ENCODE measurements at regions of chr10 and their contacts with region 1.

Region 1: DNA sequence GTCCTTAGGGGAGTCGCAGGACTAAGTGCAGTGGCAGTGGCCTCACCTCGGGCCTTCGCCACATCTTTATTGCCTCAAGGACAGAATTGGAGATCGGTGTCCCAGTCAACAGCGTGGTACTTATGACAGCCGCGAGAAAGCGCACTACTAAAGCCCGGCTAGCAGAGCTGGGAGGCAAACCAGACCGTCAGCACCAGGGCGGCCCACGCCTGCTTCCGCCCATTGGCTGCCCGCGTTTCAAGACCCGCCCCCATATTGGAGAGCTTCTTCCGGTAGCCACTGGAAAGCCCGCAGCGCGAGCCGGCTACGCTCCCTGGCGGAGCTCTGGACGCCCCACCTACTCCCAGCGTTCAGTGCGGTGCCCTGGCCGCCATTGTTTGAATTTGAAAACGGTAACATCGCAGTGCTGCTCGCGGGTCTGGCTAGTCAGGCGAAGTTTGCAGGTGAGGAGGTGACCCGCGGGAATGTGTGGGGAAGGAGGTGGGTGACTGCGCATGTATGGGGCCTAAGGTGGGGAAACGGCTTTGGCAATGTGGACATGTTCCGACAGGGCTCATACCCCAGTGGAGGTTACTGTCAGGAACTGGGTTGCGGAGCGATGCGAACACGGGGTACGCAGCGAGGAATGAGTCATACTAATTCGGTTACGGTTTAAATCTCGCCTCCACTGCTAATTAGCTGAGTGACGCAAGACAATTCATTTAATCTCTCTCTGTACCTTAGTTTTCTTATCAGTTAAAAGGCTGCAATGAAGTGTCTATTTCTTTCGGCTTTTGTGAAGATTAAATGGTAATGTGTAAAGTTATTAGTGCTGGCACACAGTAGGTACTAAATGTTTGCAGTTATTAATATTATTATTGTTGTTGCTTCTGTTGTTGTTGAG is at the start of gene KIF20B:
- DNase-seq: peak; percentile 97
- ATAC-seq: peak; percentile 100
- total RNA-seq, gene KIF20B: 3.0 TPM

Region 2: GRCh38 chr10:89481662-89482061 is 219.8 kb before region 1 on chr10:
- intact Hi-C with region 1: no loop called
- DNase-seq: no peak
- ATAC-seq: peak; percentile 58

Region 3: GRCh38 chr10:89643431-89644331 is 57.8 kb before region 1 on chr10:
- intact Hi-C with region 1: loop called (anchors 1 kb)
- DNase-seq: peak; percentile 79
- ATAC-seq: peak; percentile 89

Region 4: DNA sequence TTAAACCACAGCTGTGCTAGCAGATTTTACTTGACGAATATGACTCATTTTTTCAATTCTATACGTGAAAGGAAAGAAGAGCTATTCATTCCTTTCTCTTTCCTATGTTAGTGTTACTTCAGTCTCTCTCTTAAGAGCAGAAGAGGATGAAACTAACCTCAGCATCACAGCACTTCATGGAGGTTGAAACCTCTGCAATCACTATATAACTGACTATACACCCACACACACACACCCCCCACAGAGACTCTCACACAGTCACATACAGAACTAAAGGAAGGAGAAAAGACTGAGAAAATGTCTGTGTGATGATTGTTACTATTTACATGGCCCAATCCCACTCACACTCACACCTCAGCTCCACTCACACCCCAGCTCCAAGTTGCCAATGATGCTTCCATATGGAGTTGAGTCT is 104.1 kb after region 1 on chr10:
- intact Hi-C with region 1: no loop called
- DNase-seq: no peak
- ATAC-seq: no peak

Region 5: GRCh38 chr10:89873055-89873454 is 171.6 kb after region 1 on chr10:
- intact Hi-C with region 1: no loop called
- DNase-seq: no peak
- ATAC-seq: no peak

Measured in Right ventricle myocardium inferior (tissue), 1 donor.